ENCODE measurements at regions of chr17 and their contacts with region 1.

Region 1: GRCh38 chr17:62188713-62189112 is 123.6 kb upstream of the MED13 start:
- DNase-seq: peak; percentile 93 to 94
- H3K4me3 ChIP-seq: no peak overlapping the region
- H3K4me3 Mint-ChIP-seq: peak overlapping the region; percentile 75
- H3K27ac Mint-ChIP-seq: peak overlapping the region; percentile 99
- H3K4me1 ChIP-seq: peaks cover 34% of the 10 kb centered on the region
- H3K4me1 Mint-ChIP-seq: peaks cover 30% of the 10 kb centered on the region
- H3K27me3 ChIP-seq: no peaks in the 10 kb centered on the region
- H3K27me3 Mint-ChIP-seq: no peaks in the 10 kb centered on the region
- CTCF ChIP-seq: no peak

Region 2: GRCh38 chr17:61883211-61883610 is 305.5 kb before region 1 on chr17:
- CTCF ChIA-PET with region 1: no interaction called
- POLR2A ChIA-PET with region 1: no interaction called
- intact Hi-C with region 1: no loop called
- DNase-seq: no peak
- H3K4me3 ChIP-seq: no peak overlapping the region
- H3K4me3 Mint-ChIP-seq: no peak overlapping the region
- H3K27ac Mint-ChIP-seq: no peak overlapping the region
- H3K4me1 ChIP-seq: no peaks in the 10 kb centered on the region
- H3K4me1 Mint-ChIP-seq: no peaks in the 10 kb centered on the region
- H3K27me3 ChIP-seq: no peaks in the 10 kb centered on the region
- H3K27me3 Mint-ChIP-seq: no peaks in the 10 kb centered on the region
- CTCF ChIP-seq: no peak

Region 3: DNA sequence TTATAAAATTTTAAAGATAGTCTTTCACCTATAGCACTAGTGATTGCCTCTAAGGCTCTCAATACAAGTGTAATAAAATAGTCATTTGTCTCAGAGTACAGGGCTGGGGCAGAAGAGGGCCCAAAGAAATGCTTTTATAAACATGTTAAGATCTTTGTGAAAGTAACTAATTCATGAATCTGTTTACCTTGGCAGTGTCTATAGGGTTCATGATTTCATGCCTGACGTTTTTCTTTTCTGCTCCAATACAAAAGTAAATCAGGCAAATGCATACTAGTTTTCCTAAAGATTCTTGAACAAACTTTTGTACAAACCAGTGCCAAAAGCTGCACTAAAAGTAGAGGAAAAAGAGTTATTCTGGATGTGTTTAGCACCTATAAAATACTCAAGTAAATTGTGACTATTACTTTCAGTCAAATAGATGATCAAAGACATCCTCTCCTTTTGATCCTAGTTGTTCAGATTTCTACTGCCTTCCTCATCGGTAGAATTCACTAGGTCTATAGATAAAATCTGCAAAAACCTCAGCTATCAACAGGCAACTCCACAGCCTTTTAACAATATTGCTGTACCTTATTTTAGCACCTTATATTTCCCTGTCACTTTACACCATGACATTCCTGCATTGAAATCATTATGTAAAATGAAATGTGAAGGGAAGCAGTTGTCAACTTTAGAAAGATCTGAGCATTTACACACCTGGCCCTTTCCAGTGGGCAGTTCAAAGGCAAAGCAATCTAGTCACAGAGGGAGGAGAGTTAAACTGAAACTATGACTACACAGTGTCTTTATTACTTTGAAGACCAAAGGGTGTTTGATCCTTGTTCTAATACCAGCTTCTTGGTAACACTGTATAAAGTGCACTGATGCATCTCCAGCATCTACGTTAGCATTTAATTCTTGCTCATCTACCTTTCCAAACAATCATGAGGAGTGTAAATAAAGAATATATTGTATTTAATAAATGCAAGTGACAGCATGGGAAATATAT is 23.7 kb before region 1 on chr17:
- CTCF ChIA-PET with region 1: no interaction called
- POLR2A ChIA-PET with region 1: no interaction called
- intact Hi-C with region 1: loop called (anchors 2 kb)
- DNase-seq: peak; percentile 63 to 67
- H3K4me3 ChIP-seq: no peak overlapping the region
- H3K4me3 Mint-ChIP-seq: peak overlapping the region; percentile 60
- H3K27ac Mint-ChIP-seq: peak overlapping the region; percentile 73
- H3K4me1 ChIP-seq: peaks cover 53% of the 10 kb centered on the region
- H3K4me1 Mint-ChIP-seq: peaks cover 40% of the 10 kb centered on the region
- H3K27me3 ChIP-seq: no peaks in the 10 kb centered on the region
- H3K27me3 Mint-ChIP-seq: no peaks in the 10 kb centered on the region
- CTCF ChIP-seq: no peak

Region 4: GRCh38 chr17:62206543-62206942 is 17.8 kb after region 1 on chr17:
- CTCF ChIA-PET with region 1: no interaction called
- POLR2A ChIA-PET with region 1: no interaction called
- intact Hi-C with region 1: loop called (anchors 1 kb)
- DNase-seq: no peak
- H3K4me3 ChIP-seq: no peak overlapping the region
- H3K4me3 Mint-ChIP-seq: no peak overlapping the region
- H3K27ac Mint-ChIP-seq: no peak overlapping the region
- H3K4me1 ChIP-seq: peaks cover 10% of the 10 kb centered on the region
- H3K4me1 Mint-ChIP-seq: no peaks in the 10 kb centered on the region
- H3K27me3 ChIP-seq: no peaks in the 10 kb centered on the region
- H3K27me3 Mint-ChIP-seq: no peaks in the 10 kb centered on the region
- CTCF ChIP-seq: no peak

Region 5: DNA sequence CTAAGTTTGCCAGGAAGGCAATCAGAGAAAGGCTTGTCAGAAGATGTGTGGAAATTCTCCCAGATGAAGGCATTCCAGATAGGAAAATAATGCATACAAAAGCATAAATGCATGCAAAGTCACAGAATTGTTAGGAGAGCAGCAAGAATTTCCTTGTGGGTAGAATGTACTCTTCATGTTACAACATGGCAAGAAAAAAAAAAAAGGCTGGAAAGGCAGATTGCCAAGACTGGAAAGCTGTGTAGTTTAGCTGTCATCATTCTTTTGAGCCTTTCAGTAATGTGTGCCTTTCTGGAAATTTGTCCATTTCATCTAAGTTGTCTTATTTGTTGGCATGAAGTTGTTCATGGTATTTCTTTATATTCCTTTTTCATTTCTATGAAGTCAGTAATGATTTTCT is 120.7 kb after region 1 on chr17:
- CTCF ChIA-PET with region 1: no interaction called
- POLR2A ChIA-PET with region 1: no interaction called
- intact Hi-C with region 1: no loop called
- DNase-seq: no peak
- H3K4me3 ChIP-seq: no peak overlapping the region
- H3K4me3 Mint-ChIP-seq: no peak overlapping the region
- H3K27ac Mint-ChIP-seq: no peak overlapping the region
- H3K4me1 ChIP-seq: peaks cover 26% of the 10 kb centered on the region
- H3K4me1 Mint-ChIP-seq: peaks cover 28% of the 10 kb centered on the region
- H3K27me3 ChIP-seq: no peaks in the 10 kb centered on the region
- H3K27me3 Mint-ChIP-seq: no peaks in the 10 kb centered on the region
- CTCF ChIP-seq: no peak

Measured in Caco-2 (cell line).